Lower leg skin (tissue), 4 donors: ENCODE measurements at regions of chr5 and their contacts with region 1.

Region 1: DNA sequence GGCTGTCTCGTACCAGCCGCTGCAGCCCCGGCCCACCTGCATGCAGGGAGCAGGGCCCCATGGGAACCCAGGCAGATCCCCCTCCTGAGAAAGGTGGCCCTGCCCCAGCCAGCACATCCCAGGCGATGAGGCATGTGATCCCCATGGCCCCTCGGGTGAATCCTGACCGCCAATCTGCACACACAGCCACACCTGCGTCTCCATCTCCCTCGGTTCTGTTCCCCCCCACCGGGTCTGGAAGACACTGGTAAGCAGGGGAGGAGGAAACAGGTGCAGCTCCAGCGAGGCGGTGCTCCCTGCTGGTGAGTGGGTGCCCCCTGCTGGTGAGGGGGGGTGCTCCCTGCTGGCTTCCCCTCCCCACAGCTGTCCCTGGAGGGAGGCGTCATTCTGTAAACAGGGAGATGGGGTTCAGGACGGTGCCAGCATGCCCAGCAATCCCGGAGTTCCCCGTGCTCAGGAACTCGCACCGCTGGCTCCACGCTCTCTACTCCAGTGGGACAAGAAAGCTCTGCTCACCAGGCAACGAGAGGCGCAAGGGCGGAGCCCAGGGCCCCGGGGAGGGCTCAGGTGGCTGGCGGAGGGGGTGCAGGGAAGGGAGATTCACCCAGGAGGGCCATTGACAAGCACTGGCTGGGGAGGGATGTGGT is 28.4 kb upstream of the SLC12A7 start:
- DNase-seq: peak; percentile 64 to 95
- H3K4me3 ChIP-seq: no peak overlapping the region
- CTCF ChIP-seq: peak in 1 of 3 donors; percentile 36
- POLR2A ChIP-seq: no peak

Region 2: DNA sequence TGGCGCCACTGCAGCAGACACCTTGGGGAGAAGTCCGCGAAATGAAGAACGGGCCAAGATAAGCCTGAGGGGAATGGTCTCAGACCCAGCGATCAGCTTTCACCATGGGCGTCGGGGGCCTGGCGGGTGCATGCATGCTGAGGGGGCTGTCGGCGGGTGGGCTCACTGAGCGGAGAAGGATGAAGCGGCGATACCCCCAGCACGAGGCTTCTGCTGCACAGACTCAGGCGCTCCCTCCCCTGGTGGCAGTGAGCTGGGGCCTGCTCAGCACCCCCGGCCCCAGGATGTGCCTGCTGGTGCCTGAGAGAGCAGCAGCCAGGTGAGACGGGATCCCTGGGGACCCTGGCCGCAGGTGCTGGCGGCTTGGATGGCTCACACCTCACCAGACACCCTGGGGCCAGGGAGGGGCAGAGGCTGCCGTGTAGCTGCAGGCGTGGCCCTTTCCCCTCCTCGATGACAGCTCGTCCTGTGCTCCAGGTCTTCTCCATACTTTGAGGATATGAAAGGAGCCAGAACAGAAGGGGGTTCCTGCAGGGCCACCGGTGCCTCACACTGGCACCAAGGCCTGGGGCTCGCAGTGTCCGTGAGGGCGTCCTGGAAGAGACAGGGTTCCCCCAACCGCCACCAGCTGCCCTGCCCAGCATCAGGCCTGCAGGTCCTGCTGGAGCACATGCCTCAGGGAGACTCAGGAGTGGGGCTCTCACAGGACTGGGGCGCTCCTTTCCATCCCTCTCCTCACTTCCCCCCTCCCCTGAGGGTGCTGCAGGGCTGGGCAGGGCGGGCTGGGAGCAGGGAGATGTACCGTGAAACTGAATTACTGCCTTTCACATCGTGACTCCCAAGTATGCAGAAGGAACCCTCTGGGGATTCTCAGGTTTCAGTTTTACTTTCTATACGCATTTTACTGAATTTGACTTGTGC is 496.7 kb before region 1 on chr5:
- intact Hi-C with region 1: no loop called
- DNase-seq: no peak
- H3K4me3 ChIP-seq: no peak overlapping the region
- CTCF ChIP-seq: no peak
- POLR2A ChIP-seq: no peak

Region 3: DNA sequence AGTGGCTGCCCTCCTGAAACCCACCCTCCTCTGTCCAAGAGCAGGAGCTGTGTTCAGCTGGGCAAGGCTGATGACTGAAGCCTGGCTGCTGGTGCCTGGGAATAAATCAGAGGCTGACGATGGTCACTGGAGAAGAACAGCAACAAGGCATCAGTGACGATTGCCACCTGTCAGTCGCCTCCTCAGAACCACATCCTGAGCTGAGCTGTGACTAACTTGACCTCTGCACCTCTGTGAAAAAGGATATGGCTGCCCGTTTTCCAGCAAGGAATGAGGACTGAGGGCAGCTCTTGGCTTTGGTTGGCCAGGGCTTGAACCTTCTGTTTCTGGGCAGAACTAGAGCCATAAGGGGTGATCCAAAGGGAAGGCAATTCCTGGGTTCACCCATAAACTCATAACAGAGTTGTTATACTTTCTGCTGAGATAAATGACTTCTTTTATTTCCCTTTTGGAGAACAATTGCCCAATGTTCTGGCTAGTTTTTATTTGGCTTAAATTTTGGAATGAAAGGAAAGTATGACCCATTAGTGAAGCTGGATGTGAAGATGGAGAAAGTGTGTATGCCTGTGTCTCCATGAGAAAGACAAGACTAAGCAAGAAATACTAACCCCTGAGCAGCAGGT is 207.6 kb before region 1 on chr5:
- intact Hi-C with region 1: loop called (anchors 10 kb)
- DNase-seq: peak in 1 of 2 donors; percentile 49
- H3K4me3 ChIP-seq: no peak overlapping the region
- CTCF ChIP-seq: no peak
- POLR2A ChIP-seq: no peak